ENCODE measurements at regions of chr6 and their contacts with region 1.

Region 1: DNA sequence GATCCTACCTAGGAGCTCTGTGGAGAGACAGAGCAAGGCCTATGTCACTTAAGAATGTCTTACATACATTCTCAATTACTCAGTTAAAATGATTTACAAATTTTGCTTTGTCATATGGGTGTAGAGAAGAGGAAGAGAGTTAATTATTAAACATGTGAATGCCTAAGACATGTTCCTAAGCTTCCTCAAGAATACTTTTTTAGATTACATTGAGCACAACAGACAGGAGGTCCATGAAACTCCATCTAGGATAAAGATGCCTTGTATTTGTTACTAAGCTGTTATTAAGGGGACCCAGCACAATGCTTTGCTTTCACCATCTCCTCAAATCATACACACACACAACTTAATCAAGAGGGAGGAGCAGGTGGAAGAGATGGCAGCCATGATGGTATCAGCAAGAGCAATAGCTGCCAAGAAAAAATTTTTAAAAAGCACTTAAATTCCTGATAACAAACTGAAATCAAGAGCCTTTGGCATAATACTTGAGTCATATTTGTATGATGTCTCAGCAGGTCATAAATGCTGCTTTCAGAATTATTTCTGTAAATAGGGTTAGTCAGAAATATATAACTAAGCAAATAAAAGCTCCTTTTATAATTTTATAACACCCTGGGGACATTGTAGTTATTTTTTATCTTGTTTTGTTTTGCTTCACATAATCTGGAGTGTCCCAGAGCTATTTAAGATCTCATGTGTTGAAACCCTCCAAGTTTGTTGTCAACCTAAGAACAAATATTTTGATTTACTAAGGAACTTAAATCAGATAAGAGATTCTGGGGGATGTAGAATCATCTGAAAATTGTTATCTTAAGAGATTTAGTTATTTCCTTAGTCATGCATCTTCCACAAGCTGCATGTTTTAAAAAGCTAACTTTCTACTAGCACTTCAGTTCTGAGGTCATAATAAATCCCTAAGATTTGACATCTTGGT is 70.0 kb upstream of the CD2AP start:
- DNase-seq: no peak
- ATAC-seq: peak in 3 of 4 donors; percentile 24 to 35 (median 25)
- H3K4me3 ChIP-seq: no peak overlapping the region
- H3K27ac ChIP-seq: no peak overlapping the region
- H3K4me1 ChIP-seq: no peaks in the 10 kb centered on the region
- H3K27me3 ChIP-seq: no peaks in the 10 kb centered on the region
- CTCF ChIP-seq: no peak

Region 2: DNA sequence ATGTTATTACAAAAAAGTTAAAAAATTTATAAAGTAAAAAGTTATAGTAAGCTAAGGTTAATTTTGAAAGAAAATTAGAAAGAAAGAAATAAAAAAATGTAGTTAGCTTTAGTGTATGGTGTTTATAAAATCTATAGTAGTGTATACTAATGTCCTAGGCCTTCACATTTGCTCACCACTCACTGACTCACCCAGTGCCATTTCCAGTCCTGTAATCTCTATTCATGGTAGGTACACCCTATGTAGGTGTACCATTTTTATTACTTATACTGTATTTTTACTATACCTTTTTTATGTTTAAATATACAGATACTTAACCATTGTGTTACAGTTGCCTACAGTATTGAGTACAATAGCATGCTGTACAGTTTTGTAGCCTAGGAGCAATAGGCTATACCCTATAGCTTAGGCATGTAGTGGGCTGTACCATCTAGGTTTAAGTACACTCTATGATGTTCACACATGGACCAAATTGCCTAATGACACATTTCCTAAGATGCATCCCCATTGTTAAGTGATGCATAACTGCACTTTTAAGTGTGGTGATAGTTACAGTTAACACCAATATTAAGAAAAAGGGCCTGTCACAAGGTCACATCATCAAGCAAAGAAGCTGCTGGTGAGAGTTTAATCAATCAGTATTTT is 78.0 kb after region 1 on chr6:
- intact Hi-C with region 1: no loop called
- DNase-seq: no peak
- ATAC-seq: no peak
- H3K4me3 ChIP-seq: no peak overlapping the region
- H3K27ac ChIP-seq: no peak overlapping the region
- H3K4me1 ChIP-seq: peaks cover 8 to 58% (median 30%) of the 10 kb centered on the region in 3 donors
- H3K27me3 ChIP-seq: no peaks in the 10 kb centered on the region
- CTCF ChIP-seq: no peak

Region 3: DNA sequence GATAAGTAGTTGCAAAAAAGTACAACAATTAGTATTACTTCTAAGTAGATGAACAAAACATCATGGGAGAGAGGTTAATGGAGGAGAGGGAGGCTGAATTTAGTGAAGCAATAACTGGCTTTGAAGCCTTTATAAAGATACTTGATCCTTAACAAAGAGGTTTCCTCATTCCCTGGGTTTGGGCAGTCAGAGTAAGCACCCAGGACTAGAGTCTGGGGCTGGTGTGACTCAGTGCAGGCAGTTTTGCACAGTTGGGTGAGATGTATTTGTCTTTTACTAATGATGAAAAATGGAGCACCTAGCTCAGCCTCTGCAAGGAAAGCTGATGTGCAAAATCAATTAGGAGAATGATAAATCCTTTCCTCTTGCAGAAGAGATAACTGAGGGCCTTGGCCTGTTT is 362.4 kb after region 1 on chr6:
- intact Hi-C with region 1: loop called in 1 of 3 experiments (anchors 10 kb)
- DNase-seq: no peak
- ATAC-seq: no peak
- H3K4me3 ChIP-seq: no peak overlapping the region
- H3K27ac ChIP-seq: no peak overlapping the region
- H3K4me1 ChIP-seq: no peaks in the 10 kb centered on the region
- H3K27me3 ChIP-seq: no peaks in the 10 kb centered on the region
- CTCF ChIP-seq: no peak

Measured in pancreas (tissue), 10 donors.